Activated naive CD4-positive, alpha-beta T cell treated with anti-CD3 and anti-CD28 coated beads, Interleukin-2, amount 10 ng/mL, durations not matched to agents 7 days and 5 days (primary cell): ENCODE measurements at regions of chr3 and their contacts with region 1.

Region 1: DNA sequence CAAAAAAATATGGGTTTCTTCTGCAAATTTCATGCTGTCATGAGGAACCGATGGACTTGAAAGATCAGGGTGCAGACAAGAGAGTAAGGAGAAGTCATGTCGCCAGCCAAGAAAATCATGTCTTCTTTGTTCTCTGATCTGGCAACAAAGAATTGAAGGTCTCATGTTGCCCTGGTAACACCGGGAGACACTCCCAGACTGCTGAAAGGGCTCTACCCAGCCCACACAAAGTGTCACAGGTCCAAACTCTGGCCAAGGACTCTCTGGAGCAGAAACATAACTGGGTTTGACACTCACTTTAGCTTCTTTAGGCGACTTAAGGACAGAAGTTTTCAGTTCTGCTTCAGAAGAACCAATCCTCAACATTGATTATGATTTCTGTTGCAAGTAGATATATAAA is 42.9 kb downstream of the SIDT1 start:
- DNase-seq: no peak
- H3K4me3 Mint-ChIP-seq: no peak overlapping the region
- H3K27ac Mint-ChIP-seq: no peak overlapping the region
- H3K4me1 Mint-ChIP-seq: peaks cover 3% of the 10 kb centered on the region
- H3K27me3 Mint-ChIP-seq: no peaks in the 10 kb centered on the region

Region 2: DNA sequence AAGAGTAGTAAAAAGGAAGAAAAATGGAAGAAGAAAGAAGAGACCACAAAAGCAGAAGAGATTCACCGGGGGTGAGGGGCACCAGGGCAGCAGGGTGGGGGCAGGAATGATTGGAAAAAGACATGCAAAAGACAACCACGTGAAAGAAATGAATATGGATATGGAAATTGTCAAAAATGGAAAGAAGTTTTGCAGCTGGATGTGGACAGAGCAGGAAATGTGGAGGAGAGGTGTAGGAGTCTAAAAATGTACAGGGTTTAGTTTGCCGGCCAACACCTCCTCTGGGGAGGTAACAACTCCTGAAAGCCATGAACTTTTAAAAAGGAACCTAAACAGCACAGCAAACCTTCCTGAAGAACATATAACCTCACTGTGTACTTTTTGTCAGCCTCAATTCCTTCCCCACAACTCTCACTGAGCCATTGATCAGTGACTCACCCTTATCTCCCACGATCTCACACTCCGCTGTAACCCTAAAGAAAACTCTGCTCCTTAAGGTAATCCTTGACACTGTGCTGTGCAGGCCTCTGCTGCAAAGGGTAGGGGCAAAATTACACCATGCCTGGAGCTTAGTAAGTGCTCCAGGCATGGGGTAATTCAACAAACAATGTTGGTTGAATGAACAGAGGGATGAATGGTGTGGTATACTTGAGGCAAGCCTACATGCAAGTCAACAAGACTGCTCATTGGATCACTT is 464.0 kb before region 1 on chr3:
- CTCF ChIA-PET with region 1: no interaction called
- DNase-seq: no peak
- H3K4me3 Mint-ChIP-seq: no peak overlapping the region
- H3K27ac Mint-ChIP-seq: no peak overlapping the region
- H3K4me1 Mint-ChIP-seq: peaks cover 8% of the 10 kb centered on the region
- H3K27me3 Mint-ChIP-seq: no peaks in the 10 kb centered on the region

Region 3: DNA sequence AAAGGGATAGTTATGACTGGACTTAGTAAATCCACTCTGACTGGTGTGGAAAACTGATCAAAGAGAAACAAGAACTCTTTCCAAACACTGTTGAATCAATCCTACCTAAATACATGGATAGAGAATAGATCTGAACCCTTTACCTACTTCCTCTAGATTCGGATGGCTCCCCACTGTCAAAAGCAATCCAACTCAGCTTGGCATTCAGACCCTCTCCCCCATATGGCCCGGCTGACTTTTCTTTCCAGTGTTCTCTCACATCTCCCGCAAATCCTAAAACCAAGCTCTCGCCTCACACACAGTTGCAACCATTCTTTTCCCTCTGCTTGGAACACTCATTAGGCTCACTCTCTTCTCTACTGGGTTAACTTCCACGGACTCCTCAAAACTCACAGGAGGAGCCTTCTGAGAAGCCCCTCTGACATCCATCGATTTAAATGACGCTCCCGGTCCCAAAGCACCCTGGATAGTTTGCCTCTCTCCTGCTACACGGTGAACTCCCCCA is 60.9 kb before region 1 on chr3:
- CTCF ChIA-PET with region 1: interaction called, 18 read pairs
- DNase-seq: no peak
- H3K4me3 Mint-ChIP-seq: no peak overlapping the region
- H3K27ac Mint-ChIP-seq: no peak overlapping the region
- H3K4me1 Mint-ChIP-seq: peaks cover 19% of the 10 kb centered on the region
- H3K27me3 Mint-ChIP-seq: peaks cover 19% of the 10 kb centered on the region

Region 4: DNA sequence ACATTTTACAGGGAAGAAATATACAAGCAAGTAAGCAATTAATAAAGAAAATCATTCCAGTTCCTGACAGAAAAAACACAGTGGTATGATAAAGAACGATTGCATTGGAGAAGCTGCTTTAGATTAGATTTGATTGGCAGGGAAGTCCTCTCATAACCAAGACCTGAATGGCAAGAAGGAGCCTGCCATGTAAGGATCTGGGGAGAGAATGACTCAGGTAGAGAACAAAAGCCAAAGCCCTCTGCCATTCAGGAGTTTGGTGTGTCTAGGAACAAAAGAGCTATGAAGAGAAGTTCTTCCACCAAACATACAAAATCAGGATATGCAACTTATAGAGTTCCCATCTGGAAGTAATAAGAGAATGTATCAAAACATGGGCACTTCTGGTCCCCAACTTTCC is 14.8 kb after region 1 on chr3:
- CTCF ChIA-PET with region 1: interaction called, 14 read pairs
- DNase-seq: no peak
- H3K4me3 Mint-ChIP-seq: no peak overlapping the region
- H3K27ac Mint-ChIP-seq: no peak overlapping the region
- H3K4me1 Mint-ChIP-seq: peaks cover 6% of the 10 kb centered on the region
- H3K27me3 Mint-ChIP-seq: no peaks in the 10 kb centered on the region

Region 5: GRCh38 chr3:113606539-113607218 is 31.5 kb after region 1 on chr3:
- CTCF ChIA-PET with region 1: interaction called, 14 read pairs
- DNase-seq: peak; percentile 70
- H3K4me3 Mint-ChIP-seq: peak overlapping the region; percentile 2
- H3K27ac Mint-ChIP-seq: peak overlapping the region; percentile 50
- H3K4me1 Mint-ChIP-seq: peaks cover 28% of the 10 kb centered on the region
- H3K27me3 Mint-ChIP-seq: no peaks in the 10 kb centered on the region

Region 6: DNA sequence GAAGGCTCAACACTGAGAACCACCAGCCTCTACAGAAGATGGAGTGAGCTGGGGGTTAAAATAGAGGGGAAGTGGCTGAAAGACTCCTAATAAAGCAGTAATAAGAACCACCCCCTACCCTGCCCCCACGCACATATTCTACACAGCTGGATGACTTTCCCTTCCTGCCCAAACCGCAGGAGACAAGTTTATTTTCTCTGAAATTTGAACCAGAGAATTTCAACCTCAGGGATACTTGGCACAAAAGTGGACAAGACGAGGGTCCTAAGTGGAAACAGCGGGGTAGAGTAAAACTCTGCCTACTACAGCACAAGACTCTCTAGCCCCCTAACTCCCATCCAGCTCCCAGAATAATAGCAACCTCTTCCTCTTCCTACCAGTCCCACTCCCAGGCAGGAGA is 92.8 kb after region 1 on chr3:
- CTCF ChIA-PET with region 1: no interaction called
- DNase-seq: no peak
- H3K4me3 Mint-ChIP-seq: no peak overlapping the region
- H3K27ac Mint-ChIP-seq: no peak overlapping the region
- H3K4me1 Mint-ChIP-seq: peaks cover 29% of the 10 kb centered on the region
- H3K27me3 Mint-ChIP-seq: no peaks in the 10 kb centered on the region

Region 7: DNA sequence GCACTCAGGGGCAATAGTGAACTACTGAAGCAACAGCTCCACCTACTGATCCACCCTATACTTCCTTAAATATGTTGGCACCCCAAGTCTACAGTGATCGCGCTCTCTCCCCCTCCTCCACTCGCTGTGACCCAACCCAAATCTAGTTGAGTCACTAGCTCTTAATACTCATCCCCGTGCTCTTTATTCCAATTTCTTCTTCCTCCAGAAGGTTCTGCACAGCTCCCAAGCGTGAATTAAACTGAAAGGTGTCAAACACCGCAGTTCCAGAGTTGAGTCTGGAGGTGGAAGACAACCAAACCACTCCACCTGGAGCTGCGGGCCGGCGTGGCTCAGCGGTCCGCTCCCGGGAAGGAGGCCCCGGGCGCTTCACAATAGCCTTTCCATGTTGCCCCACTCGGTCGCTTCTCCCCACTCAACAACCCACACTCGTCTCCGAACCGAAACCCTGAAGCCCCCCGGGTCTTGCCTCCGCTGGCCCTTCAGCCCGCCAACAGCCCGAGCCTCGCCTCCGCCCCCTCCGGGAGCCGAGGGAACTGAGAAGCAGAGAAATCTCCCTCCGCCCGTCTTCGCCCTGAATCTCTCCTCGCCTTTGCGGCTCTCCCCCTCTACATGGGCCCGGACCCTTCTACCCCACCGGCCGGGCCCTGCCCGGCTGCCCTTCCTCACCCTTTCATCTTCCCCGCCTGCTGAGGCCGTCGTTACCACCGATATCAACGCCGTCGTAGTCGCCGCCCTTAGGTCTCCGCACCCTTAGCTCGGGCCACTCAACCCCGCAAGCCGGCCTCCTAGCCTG is 170.3 kb after region 1 on chr3:
- CTCF ChIA-PET with region 1: interaction called, 22 read pairs
- DNase-seq: peak; percentile 83
- H3K4me3 Mint-ChIP-seq: peak overlapping the region; percentile 97
- H3K27ac Mint-ChIP-seq: peak overlapping the region; percentile 100
- H3K4me1 Mint-ChIP-seq: peaks cover 66% of the 10 kb centered on the region
- H3K27me3 Mint-ChIP-seq: no peaks in the 10 kb centered on the region